Heart right ventricle (tissue), 16 donors: ENCODE measurements at regions of chr12 and their contacts with region 1.

Region 1: GRCh38 chr12:9237286-9237685 is 29.1 kb upstream of the PZP start:
- DNase-seq: no peak
- ATAC-seq: no peak
- H3K4me3 ChIP-seq: no peak overlapping the region
- H3K27ac ChIP-seq: peak overlapping the region in 1 of 10 donors; percentile 27
- H3K4me1 ChIP-seq: peaks cover 0 to 14% (median 0%) of the 10 kb centered on the region in 9 donors
- H3K27me3 ChIP-seq: no peaks in the 10 kb centered on the region
- CTCF ChIP-seq: no peak

Region 2: GRCh38 chr12:9163392-9163791 is 73.9 kb before region 1 on chr12:
- intact Hi-C with region 1: loop called in 3 of 10 experiments (anchors 5 kb)
- DNase-seq: peak in 1 of 2 donors; percentile 60
- ATAC-seq: peak; percentile 81 to 93 (median 88)
- H3K4me3 ChIP-seq: no peak overlapping the region
- H3K27ac ChIP-seq: peak overlapping the region in 9 of 10 donors; percentile 15 to 82 (median 72)
- H3K4me1 ChIP-seq: peaks cover 0 to 44% (median 11%) of the 10 kb centered on the region in 9 donors
- H3K27me3 ChIP-seq: no peaks in the 10 kb centered on the region
- CTCF ChIP-seq: no peak

Region 3: DNA sequence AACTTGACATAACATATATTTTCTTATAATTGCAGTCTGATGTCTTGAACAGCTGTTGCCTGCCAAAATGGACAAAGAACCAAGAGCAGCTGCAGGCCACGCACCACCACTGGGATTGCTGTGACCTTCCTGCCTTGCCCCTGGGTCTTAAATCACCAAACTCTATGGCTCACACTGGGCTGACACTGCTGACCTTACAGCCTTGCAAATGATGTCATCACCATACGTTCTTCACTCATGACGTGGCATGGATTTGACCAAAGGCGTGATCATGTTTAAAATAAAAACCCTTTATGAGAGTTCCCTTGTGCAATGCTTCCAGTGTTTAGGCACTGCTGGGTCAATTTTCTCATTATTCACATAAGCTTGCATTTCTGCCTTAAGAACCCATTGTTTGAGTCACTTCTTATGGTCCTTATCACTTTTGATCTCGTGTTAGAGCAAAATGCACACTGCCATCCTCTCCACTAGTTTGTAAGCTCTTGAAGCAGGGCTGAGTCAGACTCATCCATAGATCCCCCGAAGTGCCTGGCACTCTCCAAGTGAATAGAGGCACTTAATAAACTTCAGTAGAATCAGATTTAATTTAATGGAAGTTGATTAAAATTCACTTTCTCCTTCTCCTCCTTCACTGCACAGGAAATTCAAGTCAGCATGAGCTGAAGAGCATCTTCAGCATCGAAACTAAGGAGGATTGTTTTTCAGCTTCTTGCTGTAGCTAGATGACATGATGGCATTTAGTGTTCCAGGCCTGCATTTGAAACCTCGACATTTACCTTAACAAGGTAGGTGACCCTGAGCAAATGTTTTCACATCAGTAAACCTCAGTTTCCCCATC is 103.4 kb after region 1 on chr12:
- intact Hi-C with region 1: no loop called
- DNase-seq: no peak
- ATAC-seq: no peak
- H3K4me3 ChIP-seq: no peak overlapping the region
- H3K27ac ChIP-seq: no peak overlapping the region
- H3K4me1 ChIP-seq: no peaks in the 10 kb centered on the region
- H3K27me3 ChIP-seq: no peaks in the 10 kb centered on the region
- CTCF ChIP-seq: no peak